MCF 10A (cell line): ENCODE measurements at regions of chr1 and their contacts with region 1.

Region 1: GRCh38 chr1:157193702-157194391 is 55.7 kb upstream of the ETV3 start:
- DNase-seq: peak; percentile 77
- H3K4me3 Mint-ChIP-seq: no peak overlapping the region
- H3K27ac Mint-ChIP-seq: no peak overlapping the region
- H3K4me1 Mint-ChIP-seq: peaks cover 6% of the 10 kb centered on the region
- H3K27me3 Mint-ChIP-seq: peaks cover 32% of the 10 kb centered on the region
- CTCF ChIP-seq: peak; percentile 83

Region 2: DNA sequence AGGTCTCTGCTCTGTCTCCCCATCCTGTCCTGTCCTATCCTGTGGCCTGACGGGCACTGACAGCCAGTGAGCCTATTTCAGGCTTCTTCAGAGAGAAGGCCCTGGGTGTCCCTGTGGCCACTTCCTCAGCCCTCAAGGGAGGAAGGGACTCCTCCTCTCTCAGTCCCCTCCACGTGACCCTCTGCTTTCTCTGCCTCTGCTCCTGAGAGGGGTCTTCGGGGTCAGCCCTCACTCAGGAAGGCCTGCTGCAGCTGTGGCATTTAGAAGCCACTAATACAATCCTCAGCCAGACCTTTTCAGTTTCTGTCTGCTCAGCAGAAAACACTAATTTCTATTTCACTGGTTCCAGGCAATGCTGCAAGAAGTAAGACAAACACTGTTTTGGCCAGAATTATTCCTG is 12.1 kb before region 1 on chr1:
- CTCF ChIA-PET with region 1: interaction called, 75 read pairs
- POLR2A ChIA-PET with region 1: interaction called, 3 read pairs
- intact Hi-C with region 1: no loop called
- DNase-seq: no peak
- H3K4me3 Mint-ChIP-seq: no peak overlapping the region
- H3K27ac Mint-ChIP-seq: no peak overlapping the region
- H3K4me1 Mint-ChIP-seq: no peaks in the 10 kb centered on the region
- H3K27me3 Mint-ChIP-seq: peaks cover 63% of the 10 kb centered on the region
- CTCF ChIP-seq: no peak

Region 3: DNA sequence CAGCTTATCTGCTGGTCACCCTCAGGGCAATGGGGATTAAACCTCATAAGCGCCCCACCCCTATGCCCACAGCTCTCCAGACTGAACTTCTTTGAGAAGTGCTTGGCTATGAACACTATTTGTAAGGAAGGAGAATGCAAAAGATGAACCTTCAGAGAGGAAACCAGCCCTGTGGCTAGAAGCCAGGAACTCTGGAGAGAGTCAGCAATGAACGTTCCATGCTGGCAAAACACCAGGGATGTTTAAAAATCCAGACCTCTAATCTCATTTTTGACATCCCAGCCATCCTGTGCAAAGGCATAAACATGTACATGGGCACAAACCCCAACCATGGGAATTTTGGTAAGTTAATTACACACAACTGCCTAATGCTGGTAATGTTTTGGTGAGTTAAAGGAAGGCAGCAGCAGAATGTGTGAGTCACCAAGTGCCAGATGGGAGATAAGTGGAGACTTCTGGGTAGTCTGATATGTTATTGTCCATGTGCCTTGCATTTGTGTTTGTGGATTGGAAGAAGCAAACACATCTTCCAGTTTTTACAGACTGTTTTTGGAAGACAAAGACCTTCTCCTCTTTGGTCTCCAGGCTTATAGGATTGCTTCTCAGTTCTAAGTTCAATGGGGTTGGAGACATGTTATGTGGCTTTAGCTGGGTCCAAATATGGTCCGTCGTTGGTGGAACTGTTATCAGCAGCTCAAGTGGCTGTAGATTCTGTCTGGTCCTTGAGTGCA is 118.4 kb after region 1 on chr1:
- CTCF ChIA-PET with region 1: interaction called, 3 read pairs
- POLR2A ChIA-PET with region 1: no interaction called
- intact Hi-C with region 1: loop called (anchors 10 kb)
- DNase-seq: no peak
- H3K4me3 Mint-ChIP-seq: no peak overlapping the region
- H3K27ac Mint-ChIP-seq: no peak overlapping the region
- H3K4me1 Mint-ChIP-seq: no peaks in the 10 kb centered on the region
- H3K27me3 Mint-ChIP-seq: peaks cover 56% of the 10 kb centered on the region
- CTCF ChIP-seq: no peak

Region 4: GRCh38 chr1:157403203-157403602 is 209.4 kb after region 1 on chr1:
- CTCF ChIA-PET with region 1: no interaction called
- POLR2A ChIA-PET with region 1: no interaction called
- intact Hi-C with region 1: no loop called
- DNase-seq: peak; percentile 59
- H3K4me3 Mint-ChIP-seq: no peak overlapping the region
- H3K27ac Mint-ChIP-seq: no peak overlapping the region
- H3K4me1 Mint-ChIP-seq: peaks cover 29% of the 10 kb centered on the region
- H3K27me3 Mint-ChIP-seq: no peaks in the 10 kb centered on the region
- CTCF ChIP-seq: no peak

Region 5: DNA sequence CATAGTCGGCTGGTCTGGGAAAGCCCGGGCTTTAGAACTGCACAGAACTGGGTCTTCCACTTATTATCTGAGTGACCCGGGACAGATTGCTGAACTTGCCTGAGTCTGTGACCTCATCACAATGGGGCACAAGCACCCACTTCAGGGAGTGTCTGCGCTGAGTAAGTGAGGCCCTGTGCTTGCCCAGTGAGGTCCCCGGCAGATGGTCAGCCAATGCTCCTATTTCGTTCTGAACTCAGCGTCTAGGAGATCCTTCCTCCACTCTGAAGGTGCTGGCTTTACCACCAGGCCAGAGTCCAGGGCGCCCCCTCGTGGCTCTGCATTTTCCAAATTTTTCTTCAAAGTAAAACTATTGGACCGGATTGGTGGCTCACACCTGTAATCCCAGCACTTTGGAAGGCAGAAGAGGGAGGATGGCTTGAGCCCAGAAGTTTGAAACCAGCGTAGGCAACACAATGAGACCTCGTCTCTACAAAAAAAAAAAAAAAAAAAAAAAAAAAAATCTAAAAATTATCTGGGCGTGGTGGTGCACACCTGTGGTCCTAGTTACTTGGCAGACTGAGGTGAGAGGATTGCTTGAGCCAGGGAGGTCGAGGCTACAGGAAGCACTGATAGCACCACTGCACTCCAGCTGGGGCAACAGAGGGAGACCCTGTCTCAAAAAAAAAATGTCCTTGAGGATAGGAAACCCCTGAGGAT is 296.8 kb after region 1 on chr1:
- CTCF ChIA-PET with region 1: interaction called, 54 read pairs
- POLR2A ChIA-PET with region 1: no interaction called
- intact Hi-C with region 1: loop called (anchors 1 kb)
- DNase-seq: peak; percentile 80
- H3K4me3 Mint-ChIP-seq: no peak overlapping the region
- H3K27ac Mint-ChIP-seq: no peak overlapping the region
- H3K4me1 Mint-ChIP-seq: peaks cover 5% of the 10 kb centered on the region
- H3K27me3 Mint-ChIP-seq: peaks cover 44% of the 10 kb centered on the region
- CTCF ChIP-seq: peak; percentile 82

Region 6: GRCh38 chr1:157505481-157506272 is 311.8 kb after region 1 on chr1:
- CTCF ChIA-PET with region 1: interaction called, 19 read pairs
- POLR2A ChIA-PET with region 1: no interaction called
- intact Hi-C with region 1: no loop called
- DNase-seq: peak; percentile 78
- H3K4me3 Mint-ChIP-seq: no peak overlapping the region
- H3K27ac Mint-ChIP-seq: no peak overlapping the region
- H3K4me1 Mint-ChIP-seq: no peaks in the 10 kb centered on the region
- H3K27me3 Mint-ChIP-seq: peaks cover 35% of the 10 kb centered on the region
- CTCF ChIP-seq: peak; percentile 82